CD14-positive monocyte (primary cell): ENCODE measurements at regions of chr6 and their contacts with region 1.

Region 1: GRCh38 chr6:29942275-29943052 is at the start of gene HLA-A:
- DNase-seq: peak; percentile 97 to 99 (median 98)
- H3K4me3 ChIP-seq: peak within 1 kb of the TSS; percentile 68 to 92 (median 89)
- H3K4me3 Mint-ChIP-seq: peak within 1 kb of the TSS; percentile 89 to 97
- H3K27ac ChIP-seq: peak within 1 kb of the TSS; percentile 71 to 99
- H3K27ac Mint-ChIP-seq: peak within 1 kb of the TSS; percentile 100
- H3K4me1 ChIP-seq: peaks cover 36 to 49% of the 10 kb centered on the region in 2 donors
- H3K4me1 Mint-ChIP-seq: peaks cover 67% of the 10 kb centered on the region
- H3K27me3 ChIP-seq: no peaks in the 10 kb centered on the region
- H3K27me3 Mint-ChIP-seq: peaks cover 0 to 5% (median 5%) of the 10 kb centered on the region in 3 donors
- CTCF ChIP-seq: no peak
- polyA plus RNA-seq, gene HLA-A: 1,518 to 2,788 (median 1,574) TPM

Region 2: DNA sequence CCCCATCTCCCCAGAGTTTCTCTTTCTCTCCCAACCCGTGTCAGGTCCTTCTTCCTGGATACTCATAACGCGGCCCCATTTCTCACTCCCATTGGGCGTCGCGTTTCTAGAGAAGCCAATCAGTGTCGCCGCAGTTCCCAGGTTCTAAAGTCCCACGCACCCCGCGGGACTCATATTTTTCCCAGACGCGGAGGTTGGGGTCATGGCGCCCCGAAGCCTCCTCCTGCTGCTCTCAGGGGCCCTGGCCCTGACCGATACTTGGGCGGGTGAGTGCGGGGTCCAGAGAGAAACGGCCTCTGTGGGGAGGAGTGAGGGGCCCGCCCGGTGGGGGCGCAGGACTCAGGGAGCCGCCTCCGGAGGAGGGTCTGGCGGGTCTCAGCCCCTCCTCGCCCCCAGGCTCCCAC is 219.2 kb before region 1 on chr6 and contains the start of gene HLA-F:
- intact Hi-C with region 1: loop called in 1 of 2 experiments (anchors 10 kb)
- DNase-seq: peak; percentile 91 to 98 (median 96)
- H3K4me3 ChIP-seq: peak within 1 kb of the TSS; percentile 80 to 99 (median 89)
- H3K4me3 Mint-ChIP-seq: peak within 1 kb of the TSS; percentile 93 to 95
- H3K27ac ChIP-seq: peak within 1 kb of the TSS; percentile 88 to 96
- H3K27ac Mint-ChIP-seq: peak within 1 kb of the TSS; percentile 94 to 99 (median 96)
- H3K4me1 ChIP-seq: peaks cover 18 to 22% of the 10 kb centered on the region in 2 donors
- H3K4me1 Mint-ChIP-seq: peaks cover 50% of the 10 kb centered on the region
- H3K27me3 ChIP-seq: no peaks in the 10 kb centered on the region
- H3K27me3 Mint-ChIP-seq: peaks cover 1 to 6% (median 5%) of the 10 kb centered on the region in 3 donors
- CTCF ChIP-seq: no peak
- polyA plus RNA-seq, gene HLA-F: 283 to 816 (median 394) TPM

Region 3: DNA sequence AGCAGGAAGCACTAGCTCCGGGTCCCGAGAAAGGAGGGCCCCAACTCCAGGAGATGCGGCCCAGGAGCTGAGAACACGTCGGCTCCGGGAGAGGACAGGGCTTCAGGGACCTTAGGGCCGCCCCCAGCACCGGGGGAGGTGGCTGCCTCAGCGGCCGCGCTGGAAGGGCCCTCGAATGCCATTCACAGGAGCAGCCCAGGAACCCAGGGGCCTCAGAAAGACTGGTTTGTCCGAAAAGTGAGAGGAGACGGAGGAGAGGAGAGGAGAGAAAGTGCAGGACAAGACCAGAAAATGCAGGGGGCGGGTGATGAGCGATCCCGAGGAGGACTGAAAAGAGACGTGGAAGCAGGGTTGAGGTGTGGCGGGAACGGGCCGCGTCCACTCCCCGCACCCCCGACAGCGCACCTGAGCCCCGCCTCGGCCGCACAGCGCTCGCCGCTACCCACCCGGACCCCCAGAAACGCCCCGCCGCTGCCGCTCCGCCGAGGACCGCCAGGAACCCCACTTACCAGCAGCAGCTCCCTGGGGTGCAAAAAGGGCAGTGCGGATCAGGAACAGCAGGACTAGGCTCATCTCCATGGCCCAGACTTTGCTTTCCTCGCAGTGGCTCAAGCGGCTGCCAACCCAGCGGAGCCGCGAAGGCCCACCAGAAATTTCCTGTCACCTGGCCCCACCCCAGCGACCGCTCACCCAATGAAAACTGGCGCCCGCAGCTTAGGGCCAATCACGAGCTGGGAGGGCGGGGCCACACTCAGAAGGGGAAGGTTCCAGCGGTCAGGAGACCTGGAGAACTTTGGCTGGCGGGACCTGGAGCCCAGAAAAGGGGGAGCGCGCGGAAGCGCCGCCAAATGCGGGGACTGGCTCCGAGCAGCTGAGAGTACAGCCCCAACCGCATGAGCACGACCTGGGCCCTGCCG is 193.8 kb before region 1 on chr6:
- intact Hi-C with region 1: no loop called
- DNase-seq: peak; percentile 66 to 85 (median 78)
- H3K4me3 ChIP-seq: peak overlapping the region; percentile 49 to 89 (median 62)
- H3K4me3 Mint-ChIP-seq: peak overlapping the region; percentile 99 to 100
- H3K27ac ChIP-seq: peak overlapping the region in 1 of 2 donors; percentile 54
- H3K27ac Mint-ChIP-seq: peak overlapping the region; percentile 12 to 92 (median 75)
- H3K4me1 ChIP-seq: peaks cover 23 to 39% of the 10 kb centered on the region in 2 donors
- H3K4me1 Mint-ChIP-seq: peaks cover 46% of the 10 kb centered on the region
- H3K27me3 ChIP-seq: peaks cover 0 to 8% of the 10 kb centered on the region in 2 donors
- H3K27me3 Mint-ChIP-seq: peaks cover 4 to 19% (median 13%) of the 10 kb centered on the region in 3 donors
- CTCF ChIP-seq: no peak

Region 4: DNA sequence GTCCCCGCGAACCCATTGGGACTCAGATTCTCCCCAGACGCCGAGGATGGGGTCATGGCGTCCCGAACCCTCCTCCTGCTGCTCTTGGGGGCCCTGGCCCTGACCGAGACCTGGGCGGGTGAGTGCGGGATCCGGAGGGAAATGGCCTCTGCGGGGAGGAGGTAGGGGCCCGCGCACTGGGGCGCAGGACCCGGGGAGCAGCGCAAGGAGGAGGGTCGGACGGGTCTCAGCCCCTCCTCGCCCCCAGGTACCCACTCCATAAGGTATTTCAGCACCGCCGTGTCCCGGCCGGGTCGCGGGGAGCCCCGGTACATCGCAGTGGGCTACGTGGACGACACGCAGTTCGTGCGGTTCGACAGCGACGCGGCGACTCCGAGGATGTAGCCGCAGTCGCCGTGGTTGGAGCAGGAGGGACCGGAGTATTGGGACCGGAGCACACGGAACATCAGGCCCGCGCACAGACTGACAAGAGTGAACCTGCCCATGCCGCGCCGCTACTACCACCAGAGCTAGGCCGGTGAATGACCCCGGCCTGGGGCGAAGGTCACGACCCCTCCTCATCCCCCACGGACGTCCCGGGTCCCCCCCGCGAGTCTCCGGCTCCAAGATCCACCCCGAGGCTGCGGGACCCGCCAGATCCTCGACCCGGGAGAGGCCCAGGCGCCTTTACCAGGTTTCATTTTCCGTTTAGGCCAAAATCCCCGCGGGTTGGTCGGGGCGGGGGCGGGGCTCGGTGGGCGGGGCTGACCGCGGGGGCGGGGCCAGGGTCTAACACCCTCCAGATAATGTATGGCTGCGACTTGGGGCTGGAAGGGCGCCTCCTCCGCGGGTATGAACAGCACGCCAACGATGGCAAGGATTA is 15.8 kb before region 1 on chr6:
- intact Hi-C with region 1: loop called in 1 of 2 experiments (anchors 2 kb)
- DNase-seq: peak; percentile 83 to 90 (median 84)
- H3K4me3 ChIP-seq: peak overlapping the region; percentile 63 to 93 (median 79)
- H3K4me3 Mint-ChIP-seq: peak overlapping the region in 1 of 2 donors; percentile 89
- H3K27ac ChIP-seq: peak overlapping the region; percentile 94 to 99
- H3K27ac Mint-ChIP-seq: peak overlapping the region in 6 of 7 donors; percentile 95 to 99 (median 96)
- H3K4me1 ChIP-seq: peaks cover 23 to 29% of the 10 kb centered on the region in 2 donors
- H3K4me1 Mint-ChIP-seq: peaks cover 31% of the 10 kb centered on the region
- H3K27me3 ChIP-seq: no peaks in the 10 kb centered on the region
- H3K27me3 Mint-ChIP-seq: no peaks in the 10 kb centered on the region
- CTCF ChIP-seq: no peak